ENCODE measurements at regions of chr7 and their contacts with region 1.

Region 1: GRCh38 chr7:144437370-144438191 is 34.1 kb upstream of the NOBOX start:
- DNase-seq: peak; percentile 69
- ATAC-seq: peak; percentile 79
- H3K4me3 Mint-ChIP-seq: no peak overlapping the region
- H3K27ac Mint-ChIP-seq: no peak overlapping the region
- H3K4me1 Mint-ChIP-seq: peaks cover 7% of the 10 kb centered on the region
- H3K27me3 Mint-ChIP-seq: no peaks in the 10 kb centered on the region; the same call in 1 of the 2 replicates
- CTCF ChIP-seq: peak; percentile 57

Region 2: DNA sequence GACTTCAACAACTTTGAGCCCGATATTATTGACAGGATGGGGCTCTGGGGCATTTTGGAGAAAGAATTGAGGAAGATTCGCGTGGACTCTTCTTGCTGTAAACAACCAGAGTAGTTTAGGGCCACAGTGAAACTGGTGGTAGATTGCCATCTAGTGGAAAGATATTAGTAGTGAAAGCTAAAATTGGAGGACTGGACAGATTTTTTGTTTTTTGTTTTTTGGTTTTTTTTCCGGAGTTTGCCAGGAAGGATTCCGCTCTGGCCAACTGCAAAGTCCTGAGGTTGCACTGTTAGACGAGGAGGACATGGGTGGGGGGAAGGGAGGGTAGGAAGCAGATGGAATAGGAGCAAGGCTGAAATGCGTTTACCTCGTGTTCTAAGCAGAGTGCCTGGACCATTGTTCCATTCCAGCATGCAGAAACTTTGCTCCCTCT is 45.7 kb before region 1 on chr7:
- CTCF ChIA-PET with region 1: interaction called, 13 read pairs
- POLR2A ChIA-PET with region 1: no interaction called
- DNase-seq: no peak
- ATAC-seq: peak; percentile 60
- H3K4me3 Mint-ChIP-seq: no peak overlapping the region
- H3K27ac Mint-ChIP-seq: peak overlapping the region; percentile 55; the same call in 1 of the 2 replicates
- H3K4me1 Mint-ChIP-seq: peaks cover 34% of the 10 kb centered on the region
- H3K27me3 Mint-ChIP-seq: no peaks in the 10 kb centered on the region
- CTCF ChIP-seq: peak; percentile 36; the same call in 1 of the 2 replicates

Measured in WTC11 (cell line).